Posterior vena cava (tissue), 2 donors: ENCODE measurements at regions of chr15 and their contacts with region 1.

Region 1: DNA sequence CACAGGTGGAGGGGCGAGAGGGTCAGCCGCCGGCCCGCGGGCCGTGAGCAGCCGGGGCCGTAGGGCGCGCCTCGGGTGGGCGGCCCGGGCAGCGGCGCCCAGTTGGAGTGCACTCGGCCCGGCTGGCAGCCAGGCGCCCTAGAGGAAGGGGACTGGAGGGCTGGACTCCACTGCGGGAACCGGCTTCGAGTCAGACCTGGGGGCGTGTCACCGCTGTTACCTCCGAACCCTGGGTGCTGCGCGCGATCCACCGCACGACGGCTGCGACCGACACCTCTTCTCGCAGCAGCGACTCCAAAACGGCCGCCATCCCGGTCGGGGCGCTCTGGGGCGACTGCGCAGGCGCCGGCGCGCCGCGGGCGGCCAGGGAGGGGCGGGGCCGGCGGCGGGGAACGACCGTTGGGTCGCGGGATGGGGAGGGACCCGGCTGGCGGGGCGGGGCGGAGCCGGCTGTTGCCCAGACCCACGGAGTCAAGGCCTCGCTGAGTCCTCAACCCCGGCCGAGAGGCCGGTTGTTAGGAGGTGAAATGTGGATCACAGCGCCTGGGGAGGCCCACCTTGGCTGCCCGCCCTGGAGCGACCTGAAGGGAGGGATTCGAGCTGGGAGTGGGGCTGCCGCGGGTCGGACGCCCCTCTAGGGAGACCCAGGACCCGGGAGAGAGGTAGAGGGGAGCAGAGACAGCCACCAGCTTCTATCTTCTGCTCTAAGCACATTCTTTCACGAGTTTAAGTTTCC is at the start of gene CDAN1:
- DNase-seq: peak; percentile 98
- total RNA-seq, gene CDAN1: 7.2 to 10.3 TPM

Region 2: DNA sequence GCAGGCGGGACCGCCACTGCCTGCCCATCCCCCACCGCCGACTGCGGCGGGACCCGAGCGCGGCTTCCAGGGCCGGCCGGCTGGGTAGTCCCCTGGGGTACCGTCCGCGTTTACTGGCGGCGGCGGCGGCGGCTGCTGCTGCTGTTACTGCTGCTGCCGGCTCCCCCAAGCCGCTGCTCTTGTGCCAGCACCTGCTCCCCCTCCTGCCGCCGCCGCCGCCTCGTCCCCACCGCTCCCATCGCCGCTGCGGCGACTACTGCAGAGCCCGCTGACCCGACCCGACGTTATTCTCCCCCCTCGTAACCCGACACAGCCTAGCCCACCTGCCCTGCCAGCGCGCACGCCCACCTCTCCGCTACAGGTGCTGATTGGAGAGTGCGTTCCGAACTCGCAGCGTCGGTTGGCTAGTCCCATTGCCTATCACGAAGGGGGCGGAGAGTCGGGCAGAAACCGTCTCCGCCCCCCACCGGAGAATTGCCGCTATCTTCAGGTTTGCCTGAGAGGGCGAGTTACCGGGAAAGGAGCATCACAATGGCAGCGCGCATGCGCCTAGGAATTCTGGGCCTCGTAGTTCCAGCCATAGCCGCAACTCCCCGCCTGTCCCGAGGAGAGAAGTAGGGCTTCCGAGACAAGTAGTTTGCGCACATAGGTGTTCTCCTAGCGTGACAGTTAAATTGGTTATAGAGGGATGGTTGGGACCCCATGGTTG is 183.7 kb after region 1 on chr15 and contains the start of gene TTBK2:
- intact Hi-C with region 1: loop called in 1 of 2 experiments (anchors 10 kb)
- DNase-seq: peak; percentile 99
- total RNA-seq, gene TTBK2: 21.7 to 25.2 TPM